ENCODE measurements at regions of chr4 and their contacts with region 1.

Region 1: DNA sequence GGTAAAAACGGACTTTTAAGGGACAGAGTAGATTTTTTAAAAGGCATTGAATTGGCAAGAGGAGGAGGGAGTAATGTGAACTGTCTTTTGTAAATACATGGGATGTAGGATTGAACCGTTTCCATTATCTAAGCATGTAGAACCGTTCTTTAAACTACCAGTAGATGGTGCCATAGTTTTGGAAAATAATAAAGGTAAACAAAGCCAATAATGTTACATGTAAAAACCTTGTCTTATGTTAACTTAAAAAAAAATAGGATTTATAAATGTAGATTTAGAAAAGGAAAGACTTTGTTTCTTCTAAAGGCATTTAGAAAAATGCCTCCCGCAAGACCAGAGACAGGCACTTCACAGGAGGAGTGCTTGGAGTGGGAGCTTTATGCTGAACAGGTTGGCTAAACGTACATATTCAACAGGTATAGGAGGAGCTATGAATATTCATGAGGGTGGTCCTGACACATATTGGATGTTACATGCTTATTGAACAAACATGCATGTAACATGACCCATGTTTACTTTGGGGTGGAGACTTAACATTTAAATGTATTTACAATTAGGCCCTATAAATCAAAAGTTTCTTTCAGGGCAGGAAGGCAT is 45.5 kb upstream of the FAM241A start:
- DNase-seq: no peak
- H3K4me3 ChIP-seq: no peak overlapping the region
- H3K27me3 ChIP-seq: no peaks in the 10 kb centered on the region
- CTCF ChIP-seq: peak; percentile 52

Region 2: DNA sequence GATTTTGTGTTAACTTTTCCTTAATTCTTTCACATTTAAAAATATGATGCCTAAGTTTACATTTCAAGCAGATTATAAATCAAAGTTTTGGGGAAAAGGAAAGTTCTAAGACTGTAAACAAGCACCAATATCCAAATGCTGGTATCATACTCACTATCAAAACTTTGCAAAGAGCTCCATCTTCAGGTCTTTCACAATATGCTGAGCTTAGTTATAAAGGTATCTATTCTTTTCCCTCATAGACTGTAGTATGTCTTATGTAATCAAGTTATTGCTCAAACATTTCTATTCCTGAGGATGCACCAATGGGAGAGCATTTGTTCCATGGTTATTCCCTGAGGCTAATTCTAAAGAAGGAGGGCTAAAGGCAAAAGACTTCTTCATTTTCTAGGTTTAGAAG is 162.4 kb before region 1 on chr4:
- CTCF ChIA-PET with region 1: no interaction called
- POLR2A ChIA-PET with region 1: no interaction called
- DNase-seq: no peak
- H3K4me3 ChIP-seq: no peak overlapping the region
- H3K27me3 ChIP-seq: peaks cover 2% of the 10 kb centered on the region
- CTCF ChIP-seq: peak; percentile 35

Region 3: GRCh38 chr4:112031712-112032328 is 68.0 kb before region 1 on chr4:
- CTCF ChIA-PET with region 1: no interaction called
- POLR2A ChIA-PET with region 1: no interaction called
- DNase-seq: no peak
- H3K4me3 ChIP-seq: no peak overlapping the region
- H3K27me3 ChIP-seq: 0 out of 2 replicates have a peak, but pooled peaks cover 1% of the 10 kb centered on the region
- CTCF ChIP-seq: peak; percentile 70

Region 4: DNA sequence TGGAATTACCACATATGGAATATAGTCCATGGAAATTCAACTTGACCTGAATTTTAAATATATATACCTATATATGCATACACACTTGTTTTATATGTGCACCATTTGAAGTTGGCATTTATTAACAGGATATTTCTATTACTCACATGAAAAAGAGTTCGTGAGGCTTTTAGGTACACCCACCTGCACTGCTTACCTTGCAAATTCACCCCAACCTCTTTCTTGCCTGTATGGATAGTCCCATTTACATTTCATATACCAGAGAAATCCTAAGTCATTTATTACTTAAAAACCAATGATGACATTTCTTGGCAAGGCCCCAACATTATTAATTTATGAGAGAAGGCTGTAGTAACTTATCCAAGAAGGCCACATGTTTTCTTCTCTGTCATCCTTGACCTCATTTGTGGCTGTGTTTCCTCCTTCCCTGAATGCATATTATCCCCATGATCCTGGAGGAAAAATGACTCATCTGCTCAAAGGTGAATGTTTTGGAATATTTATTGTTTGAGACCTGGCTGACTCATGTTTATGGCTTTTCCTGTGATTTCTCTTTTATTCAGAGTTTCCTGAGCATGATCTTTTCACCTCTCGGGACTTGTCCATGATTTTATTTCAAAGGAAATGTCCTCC is 16.7 kb before region 1 on chr4:
- CTCF ChIA-PET with region 1: interaction called, 11 read pairs
- POLR2A ChIA-PET with region 1: no interaction called
- DNase-seq: peak; percentile 50
- H3K4me3 ChIP-seq: no peak overlapping the region
- H3K27me3 ChIP-seq: no peaks in the 10 kb centered on the region
- CTCF ChIP-seq: no peak

Region 5: DNA sequence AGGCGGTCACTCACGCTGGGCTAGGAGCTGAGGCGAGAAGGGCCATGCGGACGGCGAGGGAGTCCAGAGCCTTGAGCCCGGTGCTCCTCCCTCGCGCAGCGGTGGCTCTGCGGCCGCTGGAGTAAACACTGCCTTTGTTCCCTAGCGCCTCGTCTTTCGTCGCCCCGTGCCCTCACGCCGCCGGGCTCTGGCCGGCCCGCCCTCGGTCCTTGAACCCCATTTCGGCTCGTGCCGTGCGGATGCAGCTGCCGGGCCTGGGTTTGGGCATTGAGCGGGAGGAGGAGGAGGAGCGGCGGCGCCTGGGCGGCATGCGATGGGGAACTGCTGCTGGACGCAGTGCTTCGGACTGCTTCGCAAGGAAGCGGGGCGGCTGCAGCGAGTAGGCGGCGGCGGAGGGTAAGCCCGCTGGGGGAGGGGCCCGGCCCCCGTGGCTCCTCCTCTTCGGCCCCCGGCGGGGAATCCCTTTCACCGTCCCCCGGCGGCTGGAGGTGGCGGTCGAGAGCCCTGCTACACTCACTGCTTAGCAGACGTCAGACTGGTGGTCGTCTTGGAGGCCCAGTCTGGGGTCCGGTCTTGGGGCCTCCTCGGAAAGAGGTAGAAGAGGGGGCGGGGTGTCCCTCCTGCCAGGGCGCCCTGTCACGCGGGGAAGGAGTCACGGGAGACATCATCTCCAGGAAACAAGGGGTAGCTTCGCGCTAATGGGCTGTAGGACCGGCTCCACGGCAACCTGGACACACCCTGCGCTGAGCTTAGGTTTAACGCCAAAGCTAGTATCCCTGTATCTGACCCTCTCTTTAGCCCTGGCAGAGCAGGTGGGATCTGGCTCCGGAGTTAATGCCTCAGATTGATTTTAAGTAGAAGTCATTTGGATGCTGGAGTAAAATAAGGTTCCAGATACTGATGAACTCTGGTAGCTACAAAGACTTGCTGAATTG is 132.2 kb after region 1 on chr4 and contains the start of gene AP1AR:
- CTCF ChIA-PET with region 1: interaction called, 114 read pairs
- POLR2A ChIA-PET with region 1: no interaction called
- DNase-seq: peak; percentile 9
- H3K4me3 ChIP-seq: peak within 1 kb of the TSS; percentile 99
- H3K27me3 ChIP-seq: no peaks in the 10 kb centered on the region
- CTCF ChIP-seq: peak; percentile 55
- polyA plus RNA-seq, gene AP1AR: 3.3 and 8.3 TPM in 2 replicates

Region 6: DNA sequence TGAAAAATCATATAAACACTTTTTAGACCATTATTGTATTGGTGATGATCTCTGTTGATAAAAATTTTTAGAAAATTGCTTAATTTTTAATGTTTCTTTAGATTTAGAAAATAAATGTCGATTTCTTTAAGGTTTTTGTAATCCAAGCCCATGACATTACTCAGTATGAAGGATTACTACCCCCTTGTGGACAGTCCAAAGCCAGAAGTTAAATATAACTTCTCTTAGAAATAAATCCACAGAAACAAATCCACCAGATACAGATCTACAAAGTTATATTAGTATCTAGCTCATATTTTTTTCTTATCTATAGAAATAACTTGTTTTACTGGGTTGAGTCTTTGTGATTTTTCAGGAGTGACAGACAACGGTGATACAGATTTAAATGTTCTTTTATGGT is 167.0 kb after region 1 on chr4:
- CTCF ChIA-PET with region 1: interaction called, 13 read pairs
- POLR2A ChIA-PET with region 1: no interaction called
- DNase-seq: no peak
- H3K4me3 ChIP-seq: no peak overlapping the region
- H3K27me3 ChIP-seq: no peaks in the 10 kb centered on the region
- CTCF ChIP-seq: peak; percentile 59

Region 7: DNA sequence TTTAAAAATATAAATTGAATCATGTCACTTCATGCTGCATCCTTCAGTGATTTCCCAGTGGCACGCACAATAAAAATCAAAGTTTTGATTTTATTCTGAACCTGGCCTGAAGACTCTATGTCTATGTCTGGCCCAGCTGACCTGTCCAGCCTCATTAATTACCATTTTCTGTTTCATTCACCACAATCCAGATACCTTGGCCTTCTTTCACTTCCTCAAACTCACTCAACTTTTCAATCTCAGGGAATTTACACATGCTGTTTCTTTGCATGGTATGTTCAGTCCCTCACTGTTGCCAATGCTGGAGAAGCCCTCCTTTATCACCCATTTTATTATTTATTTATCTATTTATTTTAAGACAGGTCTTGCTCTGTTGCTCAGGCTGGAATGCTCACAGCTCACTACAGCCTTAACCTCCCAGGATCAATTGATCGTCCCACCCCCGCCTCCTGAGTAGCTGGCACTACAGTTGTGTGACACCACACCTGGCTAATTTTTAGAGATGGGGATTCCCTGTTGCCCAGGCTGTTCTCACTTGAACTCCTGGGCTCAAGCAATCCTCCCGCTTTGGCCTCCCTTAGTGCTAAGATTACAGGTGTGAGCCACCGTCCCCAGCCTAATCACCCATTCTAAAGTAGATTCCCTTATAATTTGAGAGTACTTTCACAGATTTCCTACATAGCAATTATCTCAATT is 493.8 kb after region 1 on chr4:
- CTCF ChIA-PET with region 1: no interaction called
- POLR2A ChIA-PET with region 1: no interaction called
- DNase-seq: no peak
- H3K4me3 ChIP-seq: no peak overlapping the region
- H3K27me3 ChIP-seq: no peaks in the 10 kb centered on the region
- CTCF ChIP-seq: no peak